ENCODE measurements at regions of chr2 and their contacts with region 1.

Region 1: GRCh38 chr2:218033590-218034496 is 31.0 kb upstream of the TNS1 start:
- DNase-seq: no peak
- H3K4me3 ChIP-seq: peak overlapping the region; percentile 24 to 55
- H3K27ac ChIP-seq: no peak overlapping the region
- H3K4me1 ChIP-seq: peaks cover 0 to 22% of the 10 kb centered on the region in 2 donors
- H3K27me3 ChIP-seq: no peaks in the 10 kb centered on the region
- CTCF ChIP-seq: no peak

Region 2: GRCh38 chr2:217943446-217944389 is 90.1 kb before region 1 on chr2:
- intact Hi-C with region 1: loop called (anchors 5 kb)
- DNase-seq: peak; percentile 36 to 92
- H3K4me3 ChIP-seq: peak overlapping the region; percentile 64 to 81
- H3K27ac ChIP-seq: peak overlapping the region; percentile 98 to 100
- H3K4me1 ChIP-seq: peaks cover 9 to 40% of the 10 kb centered on the region in 2 donors
- H3K27me3 ChIP-seq: no peaks in the 10 kb centered on the region
- CTCF ChIP-seq: peak; percentile 37 to 54 (median 38)

Region 3: GRCh38 chr2:217981084-217981781 is 52.6 kb before region 1 on chr2:
- intact Hi-C with region 1: no loop called
- DNase-seq: no peak
- H3K4me3 ChIP-seq: no peak overlapping the region
- H3K27ac ChIP-seq: peak overlapping the region in 1 of 2 donors; percentile 79
- H3K4me1 ChIP-seq: peaks cover 18 to 37% of the 10 kb centered on the region in 2 donors
- H3K27me3 ChIP-seq: no peaks in the 10 kb centered on the region
- CTCF ChIP-seq: no peak

Region 4: GRCh38 chr2:217993817-217994463 is 39.9 kb before region 1 on chr2:
- intact Hi-C with region 1: loop called (anchors 5 kb)
- DNase-seq: peak in 1 of 2 donors; percentile 88
- H3K4me3 ChIP-seq: peak overlapping the region in 1 of 2 donors; percentile 3
- H3K27ac ChIP-seq: peak overlapping the region; percentile 59 to 69
- H3K4me1 ChIP-seq: peaks cover 21 to 50% of the 10 kb centered on the region in 2 donors
- H3K27me3 ChIP-seq: no peaks in the 10 kb centered on the region
- CTCF ChIP-seq: peak; percentile 48 to 80 (median 76)

Region 5: GRCh38 chr2:218010140-218010983 is 23.5 kb before region 1 on chr2:
- intact Hi-C with region 1: loop called (anchors 2 kb)
- DNase-seq: peak in 1 of 2 donors; percentile 77
- H3K4me3 ChIP-seq: peak overlapping the region; percentile 71 to 82
- H3K27ac ChIP-seq: peak overlapping the region; percentile 32 to 33
- H3K4me1 ChIP-seq: peaks cover 0 to 27% of the 10 kb centered on the region in 2 donors
- H3K27me3 ChIP-seq: no peaks in the 10 kb centered on the region
- CTCF ChIP-seq: peak; percentile 67 to 86 (median 73)

Region 6: GRCh38 chr2:218788529-218789255 is 754.8 kb after region 1 on chr2:
- intact Hi-C with region 1: no loop called
- DNase-seq: no peak
- H3K4me3 ChIP-seq: no peak overlapping the region
- H3K27ac ChIP-seq: peak overlapping the region in 1 of 2 donors; percentile 1
- H3K4me1 ChIP-seq: peaks cover 0 to 3% of the 10 kb centered on the region in 2 donors
- H3K27me3 ChIP-seq: no peaks in the 10 kb centered on the region
- CTCF ChIP-seq: no peak

Measured in ascending aorta (tissue), 2 donors.